T-cell (primary cell): ENCODE measurements at regions of chr19 and their contacts with region 1.

Region 1: DNA sequence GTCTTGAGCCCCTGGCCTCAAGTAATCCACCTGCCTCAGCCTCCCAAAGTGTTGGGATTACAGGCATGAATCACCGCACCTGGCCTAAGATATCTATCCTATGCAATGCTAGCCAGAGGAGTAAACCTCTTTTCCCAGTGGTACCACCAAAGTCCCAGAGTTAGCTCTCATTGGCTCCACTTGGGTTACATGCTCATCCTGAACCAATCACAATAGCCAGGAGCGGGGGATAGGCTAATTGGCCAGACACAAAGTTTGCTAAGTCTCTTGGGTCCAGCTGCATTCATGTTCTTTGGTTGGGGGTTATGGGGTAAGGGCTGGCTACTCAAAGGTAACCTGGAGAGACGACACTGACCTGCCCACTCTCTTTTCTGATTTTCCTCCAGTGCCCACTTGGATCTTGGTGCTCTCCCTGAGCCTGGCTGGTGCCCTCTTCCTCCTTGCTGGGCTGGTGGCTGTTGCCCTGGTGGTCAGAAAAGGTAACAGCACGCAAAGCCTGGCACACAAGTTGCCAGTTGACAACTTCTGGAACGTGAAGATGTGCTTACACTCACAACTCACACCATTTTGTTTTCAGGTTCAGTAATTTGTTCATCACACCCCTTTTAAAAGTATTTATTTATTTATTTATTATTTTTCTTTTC is 7.8 kb downstream of the C19orf38 start:
- DNase-seq: peak in 4 of 35 experiments; percentile 13 to 53 (median 20)
- ATAC-seq: peak in 2 of 4 experiments; percentile 40 to 45
- H3K4me3 ChIP-seq: no peak overlapping the region
- H3K4me3 Mint-ChIP-seq: no peak overlapping the region
- H3K27ac ChIP-seq: no peak overlapping the region
- H3K27ac Mint-ChIP-seq: no peak overlapping the region
- H3K4me1 ChIP-seq: no peaks in the 10 kb centered on the region
- H3K4me1 Mint-ChIP-seq: no peaks in the 10 kb centered on the region
- H3K27me3 ChIP-seq: no peaks in the 10 kb centered on the region
- H3K27me3 Mint-ChIP-seq: no peaks in the 10 kb centered on the region

Region 2: DNA sequence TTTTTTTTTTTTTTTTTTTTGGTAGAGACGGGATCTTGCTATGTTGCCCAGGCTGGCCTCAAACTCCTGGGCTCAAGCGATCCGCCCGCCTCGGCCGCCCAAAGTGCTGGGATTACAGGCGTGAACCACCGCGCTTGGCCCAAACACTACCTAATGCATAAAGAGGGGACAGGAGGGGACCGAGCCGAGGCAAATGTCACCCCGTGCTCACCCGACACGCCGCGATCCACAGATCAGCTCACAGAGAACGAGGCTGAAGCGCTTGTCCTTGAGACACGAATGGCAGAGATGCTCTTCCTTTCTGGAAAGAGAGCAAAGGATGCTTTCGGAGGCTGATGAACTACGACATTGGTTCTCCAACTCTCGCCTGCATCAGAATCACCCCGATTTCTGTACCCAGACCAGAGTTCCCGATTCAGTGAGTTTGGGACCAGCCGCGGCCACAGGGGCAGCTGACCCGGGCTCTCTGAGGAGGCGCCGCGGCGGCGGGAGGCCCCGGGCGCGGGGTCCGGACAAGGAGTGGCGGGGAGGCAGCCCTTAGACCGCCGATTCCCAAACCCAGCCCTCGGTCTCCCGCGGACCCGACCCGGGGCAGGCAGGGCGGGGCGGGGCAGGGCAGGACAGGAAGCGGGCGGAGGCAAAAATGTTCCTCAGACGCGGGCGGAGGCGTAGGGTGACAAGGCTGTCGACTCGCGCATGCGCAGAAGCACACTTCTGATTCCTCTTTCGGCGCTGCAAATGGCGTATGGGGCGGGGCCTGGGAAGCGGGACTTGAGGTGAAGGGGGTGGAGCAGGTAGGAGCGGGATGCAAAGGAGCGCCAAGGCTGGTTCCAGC is 1546.6 kb before region 1 on chr19 and contains the start of gene ZNF699:
- CTCF ChIA-PET with region 1: no interaction called
- POLR2A ChIA-PET with region 1: no interaction called
- DNase-seq: peak; percentile 95 to 98 (median 97)
- ATAC-seq: peak; percentile 90 to 95 (median 92)
- H3K4me3 ChIP-seq: peak within 1 kb of the TSS; percentile 80 to 97
- H3K4me3 Mint-ChIP-seq: peak within 1 kb of the TSS; percentile 87 to 89 (median 88)
- H3K27ac ChIP-seq: peak within 1 kb of the TSS; percentile 74
- H3K27ac Mint-ChIP-seq: peak within 1 kb of the TSS; percentile 92 to 95
- H3K4me1 ChIP-seq: peaks cover 9 to 17% of the 10 kb centered on the region in 2 experiments
- H3K4me1 Mint-ChIP-seq: peaks cover 29 to 37% (median 35%) of the 10 kb centered on the region in 3 donors
- H3K27me3 ChIP-seq: no peaks in the 10 kb centered on the region
- H3K27me3 Mint-ChIP-seq: no peaks in the 10 kb centered on the region
- total RNA-seq, gene ZNF699: 11.3 to 23.0 (median 17.9) TPM

Region 3: DNA sequence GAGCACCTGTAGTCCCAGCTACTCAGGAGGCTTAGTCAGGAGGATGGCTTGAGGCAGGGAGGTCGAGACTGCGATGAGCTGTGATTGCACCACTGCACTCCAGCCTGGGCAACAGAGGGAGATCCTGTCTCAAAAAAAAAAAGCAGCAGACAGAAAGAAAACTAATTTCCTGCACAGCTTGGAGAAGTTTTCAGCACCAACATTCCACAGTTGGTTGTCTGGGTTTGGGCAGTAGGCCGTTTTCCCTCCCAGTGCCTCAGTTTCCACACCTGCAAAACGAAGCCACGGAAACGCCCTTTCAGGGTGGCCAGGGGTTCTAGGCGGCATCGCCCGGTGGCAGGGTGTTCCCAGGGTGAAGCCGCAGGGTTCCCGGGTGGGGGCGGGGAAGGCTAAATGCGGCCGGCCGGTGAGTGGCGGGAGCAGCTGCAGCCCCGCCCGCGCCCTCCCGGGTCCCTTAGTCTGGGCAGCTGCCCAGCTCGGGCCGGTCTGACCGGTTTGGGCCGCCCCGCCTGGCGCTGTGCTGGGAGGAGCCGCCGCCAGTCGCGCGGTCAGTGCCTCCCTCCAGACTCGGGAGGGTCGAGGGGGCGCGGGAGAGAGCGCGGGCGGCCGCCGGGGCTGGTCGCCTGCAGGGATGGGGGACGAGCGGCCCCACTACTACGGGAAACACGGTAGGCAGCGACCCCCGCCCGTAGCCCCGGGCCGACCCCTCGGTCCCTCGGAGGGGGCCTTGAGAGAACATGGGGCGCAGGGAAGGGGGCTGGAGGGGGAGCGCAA is 230.8 kb before region 1 on chr19 and contains the start of gene SLC44A2:
- CTCF ChIA-PET with region 1: no interaction called
- POLR2A ChIA-PET with region 1: no interaction called
- DNase-seq: no peak
- ATAC-seq: peak in 1 of 4 experiments; percentile 19
- H3K4me3 ChIP-seq: peak within 1 kb of the TSS in 1 of 2 donors; percentile 5
- H3K4me3 Mint-ChIP-seq: peak within 1 kb of the TSS in 1 of 3 donors; percentile 68
- H3K27ac ChIP-seq: peak within 1 kb of the TSS; percentile 25
- H3K27ac Mint-ChIP-seq: peak within 1 kb of the TSS; percentile 79 to 89
- H3K4me1 ChIP-seq: peaks cover 14 to 52% of the 10 kb centered on the region in 2 experiments
- H3K4me1 Mint-ChIP-seq: peaks cover 41 to 49% (median 42%) of the 10 kb centered on the region in 3 donors
- H3K27me3 ChIP-seq: no peaks in the 10 kb centered on the region
- H3K27me3 Mint-ChIP-seq: no peaks in the 10 kb centered on the region
- total RNA-seq, gene SLC44A2: 204 to 228 (median 218) TPM

Region 4: GRCh38 chr19:10899151-10899653 is 43.2 kb after region 1 on chr19:
- CTCF ChIA-PET with region 1: interaction called in 1 of 2 experiments, 4 read pairs
- POLR2A ChIA-PET with region 1: interaction called in 1 of 2 experiments, 13 read pairs
- DNase-seq: no peak
- ATAC-seq: no peak
- H3K4me3 ChIP-seq: no peak overlapping the region
- H3K4me3 Mint-ChIP-seq: no peak overlapping the region
- H3K27ac ChIP-seq: no peak overlapping the region
- H3K27ac Mint-ChIP-seq: no peak overlapping the region
- H3K4me1 ChIP-seq: peaks cover 4 to 15% of the 10 kb centered on the region in 2 experiments
- H3K4me1 Mint-ChIP-seq: peaks cover 11 to 21% (median 15%) of the 10 kb centered on the region in 3 donors
- H3K27me3 ChIP-seq: no peaks in the 10 kb centered on the region
- H3K27me3 Mint-ChIP-seq: no peaks in the 10 kb centered on the region